ENCODE measurements at regions of chr11 and their contacts with region 1.

Region 1: GRCh38 chr11:35391922-35392813 is 27.2 kb downstream of the SLC1A2 start:
- H3K4me3 ChIP-seq: no peak overlapping the region
- H3K27ac ChIP-seq: no peak overlapping the region
- H3K4me1 ChIP-seq: peaks cover 4% of the 10 kb centered on the region; the same call in 1 of the 2 replicates
- CTCF ChIP-seq: peak; percentile 59

Region 2: GRCh38 chr11:34512840-34513681 is 879.1 kb before region 1 on chr11:
- CTCF ChIA-PET with region 1: interaction called, 11 read pairs
- POLR2A ChIA-PET with region 1: no interaction called
- H3K4me3 ChIP-seq: no peak overlapping the region
- H3K27ac ChIP-seq: no peak overlapping the region
- H3K4me1 ChIP-seq: no peaks in the 10 kb centered on the region
- CTCF ChIP-seq: 0 out of 2 replicates have a peak, but pooled peaks have one; percentile 20

Region 3: GRCh38 chr11:34585735-34586487 is 806.3 kb before region 1 on chr11:
- CTCF ChIA-PET with region 1: interaction called, 16 read pairs
- POLR2A ChIA-PET with region 1: no interaction called
- H3K4me3 ChIP-seq: 0 out of 2 replicates have a peak overlapping the region, but pooled peaks have one; percentile 8
- H3K27ac ChIP-seq: no peak overlapping the region
- H3K4me1 ChIP-seq: no peaks in the 10 kb centered on the region
- CTCF ChIP-seq: no peak

Region 4: GRCh38 chr11:34926101-34926830 is 465.9 kb before region 1 on chr11:
- CTCF ChIA-PET with region 1: interaction called, 85 read pairs
- POLR2A ChIA-PET with region 1: no interaction called
- H3K4me3 ChIP-seq: no peak overlapping the region
- H3K27ac ChIP-seq: no peak overlapping the region
- H3K4me1 ChIP-seq: 0 out of 2 replicates have a peak, but pooled peaks cover 4% of the 10 kb centered on the region
- CTCF ChIP-seq: peak; percentile 33; the same call in 1 of the 2 replicates

Region 5: DNA sequence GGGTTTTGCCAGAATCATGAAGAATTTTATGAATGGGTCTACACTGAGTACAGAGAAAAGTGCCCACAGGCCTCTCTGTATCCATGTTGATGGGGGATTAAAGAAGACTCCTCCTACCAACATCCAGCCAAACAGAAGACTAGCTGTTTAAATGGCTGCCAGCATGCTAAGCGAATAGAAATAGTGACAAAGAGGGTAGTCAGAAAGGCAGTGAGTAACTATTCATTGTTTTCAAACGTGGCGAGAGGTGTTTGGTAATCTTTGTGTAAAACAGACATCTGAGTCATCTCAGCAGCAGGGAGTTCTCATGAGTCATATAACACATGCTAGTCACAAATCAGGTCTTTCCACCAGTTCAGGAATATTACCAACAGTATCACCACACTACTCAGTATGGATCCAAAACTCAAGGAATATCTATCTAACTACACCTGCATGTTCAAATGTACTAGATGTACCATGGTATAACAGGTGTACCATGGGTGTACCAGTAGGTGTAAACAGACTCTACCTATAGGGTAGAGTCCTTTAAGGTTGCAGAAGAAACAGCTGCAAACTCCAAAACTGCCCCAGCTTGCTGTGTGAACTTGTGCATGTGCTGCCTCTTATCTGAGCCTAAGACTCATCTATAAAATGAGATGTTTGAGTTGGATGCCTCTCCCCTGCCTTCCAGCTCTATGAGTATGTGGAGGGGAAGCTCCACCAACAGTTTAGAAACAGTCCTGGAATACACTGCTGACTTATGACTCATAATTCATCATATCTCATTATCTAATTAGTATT is 54.8 kb before region 1 on chr11:
- CTCF ChIA-PET with region 1: no interaction called
- POLR2A ChIA-PET with region 1: no interaction called
- H3K4me3 ChIP-seq: no peak overlapping the region
- H3K27ac ChIP-seq: no peak overlapping the region
- H3K4me1 ChIP-seq: no peaks in the 10 kb centered on the region
- CTCF ChIP-seq: no peak

Region 6: GRCh38 chr11:35381720-35382322 is 10.3 kb before region 1 on chr11:
- CTCF ChIA-PET with region 1: interaction called, 11 read pairs
- POLR2A ChIA-PET with region 1: no interaction called
- H3K4me3 ChIP-seq: no peak overlapping the region
- H3K27ac ChIP-seq: no peak overlapping the region
- H3K4me1 ChIP-seq: no peaks in the 10 kb centered on the region
- CTCF ChIP-seq: no peak

Region 7: GRCh38 chr11:35404388-35404775 is 12.2 kb after region 1 on chr11:
- CTCF ChIA-PET with region 1: interaction called, 16 read pairs
- POLR2A ChIA-PET with region 1: no interaction called
- H3K4me3 ChIP-seq: no peak overlapping the region
- H3K27ac ChIP-seq: no peak overlapping the region
- H3K4me1 ChIP-seq: no peaks in the 10 kb centered on the region
- CTCF ChIP-seq: no peak